CD4-positive, alpha-beta memory T cell (primary cell): ENCODE measurements at regions of chr4 and their contacts with region 1.

Region 1: GRCh38 chr4:71004281-71004851 is 10.9 kb downstream of the DCK start:
- DNase-seq: peak; percentile 40 to 77 (median 53)
- H3K4me3 ChIP-seq: no peak overlapping the region
- H3K4me3 Mint-ChIP-seq: peak overlapping the region; percentile 3 to 77 (median 64)
- H3K27ac ChIP-seq: peak overlapping the region; percentile 50
- H3K27ac Mint-ChIP-seq: peak overlapping the region; percentile 80 to 94 (median 86)
- H3K4me1 ChIP-seq: peaks cover 80% of the 10 kb centered on the region
- H3K4me1 Mint-ChIP-seq: peaks cover 66 to 91% (median 79%) of the 10 kb centered on the region in 4 donors
- H3K27me3 ChIP-seq: no peaks in the 10 kb centered on the region
- H3K27me3 Mint-ChIP-seq: no peaks in the 10 kb centered on the region

Region 2: DNA sequence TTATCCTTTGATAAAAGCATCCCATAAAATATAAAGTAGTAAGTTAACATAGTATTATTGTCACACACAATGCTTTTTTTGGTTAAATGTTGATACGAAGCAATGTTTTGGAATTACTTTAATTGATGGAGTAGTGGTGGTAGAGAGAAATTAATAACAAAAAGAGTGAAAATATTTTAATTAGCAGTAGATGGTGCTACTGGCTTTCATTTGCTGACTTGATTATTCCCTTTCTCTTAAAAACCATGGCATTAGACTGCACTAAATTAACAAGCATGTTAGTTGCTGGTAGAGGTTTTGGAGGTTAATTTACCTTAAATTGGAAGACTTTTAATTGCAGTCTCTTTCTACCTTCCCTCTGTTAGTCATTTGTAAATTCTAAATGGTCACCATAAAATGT is 19.8 kb before region 1 on chr4:
- CTCF ChIA-PET with region 1: interaction called, 74 read pairs
- POLR2A ChIA-PET with region 1: no interaction called
- intact Hi-C with region 1: no loop called
- DNase-seq: peak in 2 of 5 donors; percentile 22 to 30
- H3K4me3 ChIP-seq: no peak overlapping the region
- H3K4me3 Mint-ChIP-seq: no peak overlapping the region
- H3K27ac ChIP-seq: no peak overlapping the region
- H3K27ac Mint-ChIP-seq: no peak overlapping the region
- H3K4me1 ChIP-seq: no peaks in the 10 kb centered on the region
- H3K4me1 Mint-ChIP-seq: no peaks in the 10 kb centered on the region
- H3K27me3 ChIP-seq: no peaks in the 10 kb centered on the region
- H3K27me3 Mint-ChIP-seq: no peaks in the 10 kb centered on the region